ENCODE measurements at regions of chr9 and their contacts with region 1.

Region 1: GRCh38 chr9:93453047-93453914 is at the start of gene FAM120AOS:
- DNase-seq: peak; percentile 87 to 97 (median 94)
- H3K4me3 ChIP-seq: peak within 1 kb of the TSS; percentile 28 to 83 (median 69)
- H3K27ac ChIP-seq: peak within 1 kb of the TSS; percentile 65 to 99 (median 92)
- H3K4me1 ChIP-seq: peaks cover 12 to 54% of the 10 kb centered on the region in 2 donors
- H3K27me3 ChIP-seq: no peaks in the 10 kb centered on the region
- CTCF ChIP-seq: no peak
- POLR2A ChIP-seq: peak in 1 of 2 donors; percentile 69
- total RNA-seq, gene FAM120AOS: 40.6 to 56.1 (median 46.7) TPM

Region 2: GRCh38 chr9:93510041-93510440 is 56.8 kb after region 1 on chr9:
- intact Hi-C with region 1: loop called in 1 of 2 experiments (anchors 5 kb)
- DNase-seq: no peak
- H3K4me3 ChIP-seq: no peak overlapping the region
- H3K27ac ChIP-seq: no peak overlapping the region
- H3K4me1 ChIP-seq: peaks cover 12 to 38% of the 10 kb centered on the region in 2 donors
- H3K27me3 ChIP-seq: no peaks in the 10 kb centered on the region
- CTCF ChIP-seq: no peak
- POLR2A ChIP-seq: no peak

Region 3: GRCh38 chr9:93549611-93550010 is 96.3 kb after region 1 on chr9:
- intact Hi-C with region 1: loop called in 1 of 2 experiments (anchors 10 kb)
- DNase-seq: peak in 2 of 7 donors; percentile 34 to 38
- H3K4me3 ChIP-seq: no peak overlapping the region
- H3K27ac ChIP-seq: no peak overlapping the region
- H3K4me1 ChIP-seq: peaks cover 7 to 14% of the 10 kb centered on the region in 2 donors
- H3K27me3 ChIP-seq: no peaks in the 10 kb centered on the region
- CTCF ChIP-seq: no peak
- POLR2A ChIP-seq: no peak

Region 4: DNA sequence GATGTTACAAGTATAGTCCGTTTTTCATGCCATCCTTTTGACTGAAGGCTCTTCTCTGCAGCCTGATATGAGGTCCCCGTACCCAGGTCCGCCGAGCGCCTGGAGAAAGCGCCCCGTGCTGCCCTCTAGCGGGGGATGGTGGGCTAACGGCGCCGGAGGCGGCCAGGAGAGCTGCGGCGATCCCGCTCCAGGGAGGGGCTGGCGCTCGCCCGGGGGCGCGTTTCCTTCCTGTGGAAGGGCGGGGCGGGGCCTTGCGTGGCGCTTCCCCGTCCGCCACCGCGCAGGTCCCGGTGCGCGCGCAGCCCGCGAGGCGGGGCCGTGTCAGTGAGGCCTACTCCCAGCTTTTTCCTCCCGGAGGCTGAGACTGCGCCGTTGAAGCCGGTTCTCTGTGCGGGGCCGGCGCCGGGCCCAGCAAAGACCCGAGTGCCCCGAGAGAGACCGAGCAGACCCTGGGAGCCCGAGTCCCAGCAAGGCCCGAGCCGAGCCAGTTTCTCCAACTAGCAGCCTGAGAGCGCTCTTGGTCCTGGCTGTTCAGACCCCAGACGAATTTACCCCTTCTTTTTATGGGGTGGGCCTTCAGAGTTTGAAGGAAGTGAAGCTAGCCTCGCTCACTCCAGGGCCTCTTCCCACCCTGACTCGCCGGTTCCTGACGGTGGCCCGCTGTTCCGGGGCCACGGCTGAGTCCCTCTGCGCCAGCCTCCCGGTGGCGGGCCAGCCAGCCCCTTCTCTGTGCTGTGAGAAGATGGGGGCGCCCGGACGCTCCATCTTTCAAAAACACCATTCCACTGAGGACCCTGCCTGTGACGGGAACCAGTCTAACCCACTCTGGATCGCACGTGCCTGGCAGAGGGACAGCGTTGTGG is 113.4 kb after region 1 on chr9:
- intact Hi-C with region 1: loop called in 1 of 2 experiments (anchors 5 kb)
- DNase-seq: peak; percentile 97 to 99 (median 98)
- H3K4me3 ChIP-seq: peak overlapping the region in 2 of 4 donors; percentile 52 to 61
- H3K27ac ChIP-seq: peak overlapping the region; percentile 67 to 96 (median 94)
- H3K4me1 ChIP-seq: peaks cover 8 to 11% of the 10 kb centered on the region in 2 donors
- H3K27me3 ChIP-seq: no peaks in the 10 kb centered on the region
- CTCF ChIP-seq: peak; percentile 76 to 97 (median 90)
- POLR2A ChIP-seq: peak; percentile 87 to 94

Measured in adrenal gland (tissue), 19 donors.